Activated CD4-positive, alpha-beta T cell treated with anti-CD3 and anti-CD28 coated beads, Interleukin-2, amount 10 ng/mL, durations not matched to agents 7 days and 5 days (primary cell): ENCODE measurements at regions of chr2 and their contacts with region 1.

Region 1: GRCh38 chr2:180980106-180980942 is at the start of gene UBE2E3:
- DNase-seq: peak; percentile 79
- H3K4me3 Mint-ChIP-seq: peak within 1 kb of the TSS; percentile 97
- H3K27ac Mint-ChIP-seq: peak within 1 kb of the TSS; percentile 98
- H3K4me1 Mint-ChIP-seq: peaks cover 33% of the 10 kb centered on the region
- H3K27me3 Mint-ChIP-seq: peaks cover 26% of the 10 kb centered on the region
- total RNA-seq, gene UBE2E3: 33.3 to 41.7 TPM

Region 2: GRCh38 chr2:180970016-180970415 is 10.3 kb before region 1 on chr2:
- CTCF ChIA-PET with region 1: interaction called, 26 read pairs
- POLR2A ChIA-PET with region 1: interaction called, 3 read pairs
- DNase-seq: no peak
- H3K4me3 Mint-ChIP-seq: no peak overlapping the region
- H3K27ac Mint-ChIP-seq: no peak overlapping the region
- H3K4me1 Mint-ChIP-seq: no peaks in the 10 kb centered on the region
- H3K27me3 Mint-ChIP-seq: peaks cover 25% of the 10 kb centered on the region

Region 3: GRCh38 chr2:180991820-180992219 is 11.5 kb after region 1 on chr2:
- CTCF ChIA-PET with region 1: interaction called, 28 read pairs
- POLR2A ChIA-PET with region 1: no interaction called
- DNase-seq: no peak
- H3K4me3 Mint-ChIP-seq: no peak overlapping the region
- H3K27ac Mint-ChIP-seq: no peak overlapping the region
- H3K4me1 Mint-ChIP-seq: peaks cover 12% of the 10 kb centered on the region
- H3K27me3 Mint-ChIP-seq: no peaks in the 10 kb centered on the region